Activated B cell treated with CpG ODN at 0.5 μM for 24 hours (primary cell): ENCODE measurements at regions of chr2 and their contacts with region 1.

Region 1: GRCh38 chr2:109238580-109238979 is 109.6 kb downstream of the SH3RF3 start:
- DNase-seq: peak; percentile 30
- ATAC-seq: peak; percentile 92
- H3K4me3 Mint-ChIP-seq: peak overlapping the region; percentile 35
- H3K27ac Mint-ChIP-seq: peak overlapping the region; percentile 75
- H3K4me1 Mint-ChIP-seq: peaks cover 41% of the 10 kb centered on the region
- H3K27me3 Mint-ChIP-seq: no peaks in the 10 kb centered on the region
- CTCF ChIP-seq: no peak

Region 2: DNA sequence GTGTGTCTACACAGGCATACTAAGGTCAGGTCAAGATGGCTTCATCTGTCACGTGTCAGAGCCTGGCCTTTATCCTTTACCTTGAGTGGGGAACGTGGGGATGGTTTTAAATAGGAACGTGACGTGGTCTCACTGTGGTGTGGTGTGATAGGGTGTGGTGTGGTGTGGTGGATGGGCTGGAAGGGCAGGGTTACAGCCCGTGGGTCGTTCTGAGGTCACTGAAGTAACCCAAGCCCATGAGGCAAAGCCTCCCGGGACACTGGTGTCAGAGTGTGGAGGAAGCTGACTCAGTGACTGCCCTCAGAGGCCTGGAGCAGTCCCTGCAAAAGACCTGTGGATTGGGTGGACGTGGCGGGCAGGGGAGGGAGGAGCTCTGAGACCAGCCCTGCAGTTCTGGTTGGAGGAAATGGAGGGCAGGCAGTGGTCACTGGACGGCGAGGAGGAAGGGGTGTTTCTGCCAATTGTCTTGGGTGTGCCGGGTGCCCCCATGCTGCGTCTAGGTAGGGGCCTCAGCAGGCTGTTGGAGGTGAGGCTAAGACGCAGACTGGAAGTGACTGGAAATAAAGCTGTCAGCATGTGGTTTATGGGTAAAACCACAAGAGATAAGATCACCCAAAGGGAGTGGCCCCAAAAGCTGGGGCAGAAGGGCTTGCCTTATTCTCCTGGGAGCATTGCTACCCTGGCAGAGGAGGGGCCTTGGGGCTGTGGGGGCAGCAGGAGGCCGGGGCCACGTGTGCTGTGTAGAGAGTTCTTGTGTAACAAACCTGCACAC is 24.7 kb before region 1 on chr2:
- CTCF ChIA-PET with region 1: no interaction called
- POLR2A ChIA-PET with region 1: interaction called, 4 read pairs
- intact Hi-C with region 1: loop called (anchors 2 kb)
- DNase-seq: no peak
- ATAC-seq: peak; percentile 79
- H3K4me3 Mint-ChIP-seq: peak overlapping the region; percentile 21
- H3K27ac Mint-ChIP-seq: peak overlapping the region; percentile 18
- H3K4me1 Mint-ChIP-seq: peaks cover 80% of the 10 kb centered on the region
- H3K27me3 Mint-ChIP-seq: peaks cover 10% of the 10 kb centered on the region
- CTCF ChIP-seq: no peak

Region 3: GRCh38 chr2:109254174-109254904 is 15.8 kb after region 1 on chr2:
- CTCF ChIA-PET with region 1: interaction called, 4 read pairs
- POLR2A ChIA-PET with region 1: no interaction called
- intact Hi-C with region 1: loop called (anchors 2 kb)
- DNase-seq: no peak
- ATAC-seq: peak; percentile 73
- H3K4me3 Mint-ChIP-seq: peak overlapping the region; percentile 50
- H3K27ac Mint-ChIP-seq: peak overlapping the region; percentile 51
- H3K4me1 Mint-ChIP-seq: peaks cover 45% of the 10 kb centered on the region
- H3K27me3 Mint-ChIP-seq: no peaks in the 10 kb centered on the region
- CTCF ChIP-seq: no peak